Cardiac septum (tissue), 1 donor: ENCODE measurements at regions of chr1 and their contacts with region 1.

Region 1: GRCh38 chr1:87084244-87084836 is 169.9 kb downstream of the HS2ST1 start:
- DNase-seq: no peak

Region 2: DNA sequence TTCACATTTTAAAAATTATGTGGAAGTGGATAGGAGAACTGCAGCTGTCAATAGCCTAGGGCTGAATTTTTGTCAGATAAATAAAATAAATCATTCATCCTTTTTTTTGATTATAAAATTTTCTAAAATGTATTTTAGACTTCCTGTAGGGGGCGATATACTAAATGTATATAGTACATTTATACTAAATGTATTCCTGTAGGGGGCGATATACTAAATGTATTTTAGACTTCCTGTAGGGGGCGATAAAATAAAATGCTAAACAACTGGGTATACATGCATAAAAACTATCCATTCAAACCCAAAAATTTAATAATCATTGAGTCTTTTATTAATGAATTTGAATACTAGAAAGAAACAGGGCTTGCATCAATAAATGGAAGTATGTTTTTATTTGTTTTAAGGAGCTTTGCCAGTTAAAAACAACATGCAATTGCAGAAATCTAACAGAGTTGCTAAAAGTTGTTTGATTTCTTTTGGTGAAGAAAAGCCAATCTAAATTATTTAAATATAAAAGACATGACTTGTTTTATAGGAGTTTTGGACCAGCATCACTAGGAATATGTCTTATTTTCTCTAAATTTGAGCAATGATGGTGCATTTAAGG is 584.2 kb before region 1 on chr1:
- intact Hi-C with region 1: loop called (anchors 10 kb)
- DNase-seq: no peak

Region 3: DNA sequence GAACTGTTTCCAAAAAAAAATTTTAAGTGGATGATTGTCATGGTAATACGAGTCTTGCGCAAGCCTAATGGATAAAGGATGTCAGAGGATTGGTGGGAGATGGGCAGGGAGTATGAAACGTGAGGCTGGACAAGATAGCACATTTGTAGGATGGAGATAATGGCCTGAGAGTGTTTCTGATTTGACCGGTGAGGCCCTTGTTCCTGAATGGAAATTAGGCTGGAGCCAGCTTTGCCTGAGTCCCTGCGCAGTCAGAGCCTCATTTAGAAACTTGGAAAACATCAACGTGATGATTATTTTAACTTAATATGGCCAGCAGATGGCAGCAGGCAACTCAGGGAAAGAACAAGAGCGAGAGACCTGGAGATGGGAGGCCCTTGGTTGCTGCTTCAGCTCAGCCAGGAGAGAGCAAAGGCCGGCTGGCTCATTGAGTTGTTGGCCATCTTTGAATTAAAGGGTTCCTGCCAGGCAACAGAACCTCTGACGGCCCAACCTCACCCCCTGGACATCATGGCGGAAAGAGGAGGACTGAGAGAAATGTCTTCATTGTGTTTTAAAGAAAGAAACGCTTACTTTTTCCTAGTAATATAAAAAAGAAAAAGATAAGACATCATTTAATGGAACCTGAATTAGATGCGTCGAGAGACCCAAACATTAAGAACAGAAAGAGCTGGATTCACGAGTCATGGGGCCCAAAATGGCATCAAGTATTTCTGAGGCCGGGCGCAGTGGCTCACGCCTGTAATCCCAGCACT is 250.7 kb before region 1 on chr1:
- intact Hi-C with region 1: loop called (anchors 2 kb)
- DNase-seq: no peak

Region 4: GRCh38 chr1:86965012-86965826 is 119.1 kb before region 1 on chr1:
- intact Hi-C with region 1: loop called (anchors 10 kb)
- DNase-seq: no peak

Region 5: DNA sequence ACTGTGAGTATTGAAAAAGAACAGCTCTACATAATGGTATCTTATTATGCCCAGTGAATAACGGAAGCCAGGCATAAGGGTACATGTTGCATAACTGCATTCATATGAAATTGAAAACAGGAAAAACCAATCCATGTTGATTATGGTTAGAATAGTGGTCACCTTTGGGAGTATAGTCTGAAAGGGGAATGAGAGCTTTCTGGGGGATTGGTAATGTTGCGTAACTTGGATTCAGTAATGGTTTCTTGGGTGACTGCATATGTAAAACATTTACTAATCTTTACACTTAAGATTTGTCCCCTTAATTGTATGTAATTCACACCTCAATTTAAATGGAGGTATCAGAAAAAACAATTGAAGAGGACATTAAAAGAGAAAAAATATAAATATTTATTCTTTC is 536.5 kb after region 1 on chr1:
- intact Hi-C with region 1: no loop called
- DNase-seq: no peak